ENCODE measurements at regions of chr12 and their contacts with region 1.

Region 1: GRCh38 chr12:65022960-65023359 is 98.1 kb downstream of the WIF1 start:
- DNase-seq: no peak
- ATAC-seq: no peak
- H3K4me3 ChIP-seq: no peak overlapping the region
- H3K27ac ChIP-seq: no peak overlapping the region
- H3K4me1 ChIP-seq: no peaks in the 10 kb centered on the region
- H3K27me3 ChIP-seq: peaks cover 0 to 25% (median 6%) of the 10 kb centered on the region in 7 donors
- CTCF ChIP-seq: no peak

Region 2: GRCh38 chr12:65039306-65039705 is 16.3 kb after region 1 on chr12:
- intact Hi-C with region 1: loop called in 1 of 10 experiments (anchors 1 kb)
- DNase-seq: no peak
- ATAC-seq: no peak
- H3K4me3 ChIP-seq: no peak overlapping the region
- H3K27ac ChIP-seq: no peak overlapping the region
- H3K4me1 ChIP-seq: no peaks in the 10 kb centered on the region
- H3K27me3 ChIP-seq: peaks cover 0 to 24% (median 6%) of the 10 kb centered on the region in 7 donors
- CTCF ChIP-seq: no peak

Region 3: DNA sequence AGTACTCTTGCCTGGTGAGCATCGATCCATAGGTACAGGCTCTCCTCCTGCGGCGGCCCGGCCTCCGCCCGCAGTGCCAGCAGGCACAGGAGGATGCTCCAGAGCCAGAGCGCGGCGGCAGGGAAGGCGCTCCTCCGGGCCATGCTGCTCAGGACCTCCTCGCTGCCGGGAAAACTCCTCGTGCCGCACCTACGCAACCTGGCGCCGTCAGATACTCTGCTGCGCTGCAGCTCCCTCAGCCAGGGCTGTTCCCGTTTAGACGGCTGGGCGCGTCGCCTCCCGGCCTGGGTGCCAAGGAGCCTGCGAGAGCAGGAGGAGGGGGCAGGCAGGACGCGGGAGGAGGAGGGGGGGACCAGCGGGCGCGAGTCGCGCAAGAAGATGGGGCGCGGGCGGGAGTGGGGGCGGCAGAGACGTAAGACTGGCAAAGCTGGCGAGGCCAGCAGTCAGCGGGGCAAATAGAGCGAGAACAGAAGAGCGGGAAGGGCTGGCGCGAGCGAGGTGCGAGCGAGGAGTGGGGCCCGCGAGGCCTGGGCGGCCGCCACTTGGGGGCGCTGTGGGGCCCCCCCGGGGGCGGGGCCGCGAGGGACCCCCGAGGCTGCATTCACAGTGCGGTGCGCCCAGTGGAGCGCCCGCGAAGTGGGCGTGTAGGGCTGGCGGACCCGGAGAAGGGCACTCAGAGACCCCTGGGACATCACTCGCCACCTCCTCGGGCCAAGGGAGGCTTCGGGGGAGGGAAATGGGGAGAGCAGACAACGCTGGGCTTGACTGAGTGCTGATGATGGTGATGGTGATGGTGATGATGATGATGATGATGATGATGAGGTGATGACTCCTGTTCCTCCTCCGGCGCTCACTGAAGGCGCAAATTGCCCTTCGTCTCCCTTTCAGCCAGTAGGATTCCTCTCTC is 98.3 kb after region 1 on chr12 and contains the start of gene WIF1:
- intact Hi-C with region 1: no loop called
- DNase-seq: peak in 1 of 2 donors; percentile 14
- ATAC-seq: peak in 2 of 8 donors; percentile 34 to 51
- H3K4me3 ChIP-seq: peak within 1 kb of the TSS in 9 of 10 donors; percentile 21 to 48 (median 30)
- H3K27ac ChIP-seq: no peak within 1 kb of the TSS
- H3K4me1 ChIP-seq: peaks cover 4 to 12% (median 9%) of the 10 kb centered on the region in 9 donors
- H3K27me3 ChIP-seq: peaks cover 7 to 100% (median 97%) of the 10 kb centered on the region in 7 donors
- CTCF ChIP-seq: peak in 7 of 9 donors; percentile 11 to 44 (median 31)
- total RNA-seq, gene WIF1: not detected